ENCODE measurements at regions of chr12 and their contacts with region 1.

Region 1: GRCh38 chr12:4118017-4118510 is 155.5 kb upstream of the CCND2 start:
- DNase-seq: peak; percentile 32
- ATAC-seq: peak; percentile 30
- H3K4me3 Mint-ChIP-seq: peak overlapping the region; percentile 55
- H3K27ac Mint-ChIP-seq: peak overlapping the region; percentile 88
- H3K4me1 Mint-ChIP-seq: peaks cover 73% of the 10 kb centered on the region
- H3K27me3 Mint-ChIP-seq: no peaks in the 10 kb centered on the region

Region 2: DNA sequence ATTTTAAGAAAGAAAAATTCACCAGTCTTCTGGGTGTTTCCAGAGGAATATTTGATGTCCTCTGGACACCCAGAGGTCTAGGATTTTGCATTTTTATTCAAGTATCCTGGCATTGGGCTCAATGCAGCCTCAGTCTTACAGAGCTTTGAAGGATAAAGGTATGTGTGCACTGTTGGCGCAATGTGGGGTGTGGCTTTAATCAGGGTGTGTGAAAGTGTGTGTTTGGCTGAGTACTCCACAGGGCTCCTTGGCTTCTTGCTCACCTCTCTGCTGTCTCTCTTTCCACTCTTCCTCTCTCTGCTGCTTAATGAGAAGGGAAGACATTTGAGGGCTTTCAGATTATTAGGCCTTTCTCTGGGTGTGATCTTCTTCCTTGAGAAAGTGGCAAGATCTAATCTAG is 37.9 kb before region 1 on chr12:
- CTCF ChIA-PET with region 1: no interaction called
- POLR2A ChIA-PET with region 1: no interaction called
- DNase-seq: no peak
- ATAC-seq: no peak
- H3K4me3 Mint-ChIP-seq: no peak overlapping the region
- H3K27ac Mint-ChIP-seq: no peak overlapping the region
- H3K4me1 Mint-ChIP-seq: no peaks in the 10 kb centered on the region
- H3K27me3 Mint-ChIP-seq: peaks cover 14% of the 10 kb centered on the region

Region 3: DNA sequence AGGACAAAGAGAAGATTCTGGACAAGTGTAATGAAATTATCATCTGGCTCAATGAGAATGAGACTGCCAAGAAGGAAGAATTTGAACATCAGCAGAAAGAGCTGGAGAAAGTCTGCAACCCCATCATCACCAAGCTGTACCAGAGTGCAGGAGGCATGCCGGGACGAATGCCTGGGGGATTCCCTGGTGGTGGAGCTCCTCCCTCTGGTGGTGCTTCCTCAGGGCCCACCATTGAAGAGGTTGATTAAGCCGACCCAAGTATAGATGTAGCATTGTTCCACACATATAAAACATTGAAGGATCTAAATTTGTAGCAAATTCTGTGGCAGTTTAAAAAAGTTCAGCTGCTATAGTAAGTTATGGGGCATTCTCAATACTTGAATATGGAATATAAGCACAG is 18.8 kb before region 1 on chr12:
- CTCF ChIA-PET with region 1: no interaction called
- POLR2A ChIA-PET with region 1: no interaction called
- DNase-seq: no peak
- ATAC-seq: no peak
- H3K4me3 Mint-ChIP-seq: no peak overlapping the region
- H3K27ac Mint-ChIP-seq: no peak overlapping the region
- H3K4me1 Mint-ChIP-seq: peaks cover 13% of the 10 kb centered on the region
- H3K27me3 Mint-ChIP-seq: peaks cover 5% of the 10 kb centered on the region

Region 4: GRCh38 chr12:4141348-4142270 is 23.5 kb after region 1 on chr12:
- CTCF ChIA-PET with region 1: interaction called, 23 read pairs
- POLR2A ChIA-PET with region 1: interaction called, 30 read pairs
- DNase-seq: no peak
- ATAC-seq: no peak
- H3K4me3 Mint-ChIP-seq: peak overlapping the region; percentile 74
- H3K27ac Mint-ChIP-seq: peak overlapping the region; percentile 97
- H3K4me1 Mint-ChIP-seq: peaks cover 90% of the 10 kb centered on the region
- H3K27me3 Mint-ChIP-seq: no peaks in the 10 kb centered on the region

Region 5: DNA sequence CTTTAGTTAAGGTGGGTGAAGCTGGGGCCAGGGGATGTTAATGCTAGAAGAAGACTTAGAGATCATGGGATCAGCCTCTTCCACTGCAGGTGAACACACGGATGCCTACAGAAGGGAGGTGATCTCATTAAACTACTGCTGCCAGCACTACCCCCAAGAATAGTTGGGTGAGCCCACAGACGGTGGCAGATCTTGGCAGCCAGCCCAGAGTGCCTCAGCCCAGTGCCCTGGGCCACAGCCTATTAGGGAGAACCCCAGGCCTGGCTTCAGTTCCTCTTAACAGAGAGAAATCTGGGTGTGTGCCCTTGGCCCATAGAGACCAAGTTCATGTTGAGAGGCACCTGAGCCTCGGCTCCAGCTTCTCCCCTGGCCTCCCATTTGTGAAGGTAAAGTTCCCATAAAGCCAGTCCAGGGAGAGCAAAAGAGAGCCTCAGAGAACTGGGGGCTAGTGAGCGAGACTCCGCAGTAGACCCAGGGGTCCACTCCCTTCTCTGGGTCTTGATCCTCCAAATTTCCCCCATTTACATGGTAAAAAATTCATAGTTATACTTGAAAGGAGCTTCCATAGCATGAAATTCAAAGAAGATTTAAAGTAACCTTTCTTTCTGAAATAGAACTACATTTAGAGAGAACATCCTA is 30.5 kb after region 1 on chr12:
- CTCF ChIA-PET with region 1: interaction called, 23 read pairs
- POLR2A ChIA-PET with region 1: interaction called, 30 read pairs
- DNase-seq: peak; percentile 39
- ATAC-seq: no peak
- H3K4me3 Mint-ChIP-seq: no peak overlapping the region
- H3K27ac Mint-ChIP-seq: peak overlapping the region; percentile 74
- H3K4me1 Mint-ChIP-seq: peaks cover 96% of the 10 kb centered on the region
- H3K27me3 Mint-ChIP-seq: no peaks in the 10 kb centered on the region

Measured in activated CD8-positive, alpha-beta T cell treated with anti-CD3 and anti-CD28 coated beads, Interleukin-2, amount 10 ng/mL, durations not matched to agents 7 days and 5 days (primary cell).